ENCODE measurements at regions of chr3 and their contacts with region 1.

Region 1: GRCh38 chr3:49802719-49803464 is at the start of gene INKA1:
- DNase-seq: peak; percentile 82
- ATAC-seq: peak; percentile 68
- H3K4me3 Mint-ChIP-seq: peak within 1 kb of the TSS; percentile 92
- H3K27ac Mint-ChIP-seq: peak within 1 kb of the TSS; percentile 92
- H3K4me1 Mint-ChIP-seq: peaks cover 48% of the 10 kb centered on the region
- H3K27me3 Mint-ChIP-seq: no peaks in the 10 kb centered on the region
- CTCF ChIP-seq: peak; percentile 45
- total RNA-seq, gene INKA1: 9.4 and 10.0 TPM in 2 replicates

Region 2: DNA sequence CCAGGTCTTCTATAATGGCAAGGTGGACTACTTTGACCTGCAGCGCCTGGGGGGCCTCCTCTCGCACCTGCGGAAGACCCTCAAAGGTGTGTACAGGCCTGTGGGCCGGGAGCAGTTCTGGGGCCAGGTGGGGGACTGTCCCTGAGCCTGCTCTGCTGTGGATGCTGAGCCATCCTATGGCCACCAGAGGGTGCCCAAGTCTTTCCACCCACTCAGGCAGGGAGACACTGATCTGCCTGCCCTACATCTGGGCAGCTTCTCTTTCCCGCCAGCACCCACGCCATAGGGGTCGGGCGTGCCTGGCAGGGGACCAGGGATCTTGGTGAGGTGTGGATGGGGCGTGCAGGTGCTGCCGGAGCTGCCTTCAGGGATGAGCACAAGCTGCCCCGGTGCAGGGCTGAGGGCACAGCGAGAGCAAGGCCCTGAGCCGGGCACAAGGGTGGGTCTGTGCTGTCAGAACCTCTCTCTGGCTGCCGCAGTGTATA is 99.4 kb before region 1 on chr3:
- CTCF ChIA-PET with region 1: interaction called, 3 read pairs
- POLR2A ChIA-PET with region 1: interaction called, 4 read pairs
- intact Hi-C with region 1: loop called (anchors 1 kb)
- DNase-seq: peak; percentile 54
- ATAC-seq: peak; percentile 100
- H3K4me3 Mint-ChIP-seq: no peak overlapping the region
- H3K27ac Mint-ChIP-seq: peak overlapping the region; percentile 41
- H3K4me1 Mint-ChIP-seq: peaks cover 4% of the 10 kb centered on the region
- H3K27me3 Mint-ChIP-seq: no peaks in the 10 kb centered on the region
- CTCF ChIP-seq: no peak

Region 3: DNA sequence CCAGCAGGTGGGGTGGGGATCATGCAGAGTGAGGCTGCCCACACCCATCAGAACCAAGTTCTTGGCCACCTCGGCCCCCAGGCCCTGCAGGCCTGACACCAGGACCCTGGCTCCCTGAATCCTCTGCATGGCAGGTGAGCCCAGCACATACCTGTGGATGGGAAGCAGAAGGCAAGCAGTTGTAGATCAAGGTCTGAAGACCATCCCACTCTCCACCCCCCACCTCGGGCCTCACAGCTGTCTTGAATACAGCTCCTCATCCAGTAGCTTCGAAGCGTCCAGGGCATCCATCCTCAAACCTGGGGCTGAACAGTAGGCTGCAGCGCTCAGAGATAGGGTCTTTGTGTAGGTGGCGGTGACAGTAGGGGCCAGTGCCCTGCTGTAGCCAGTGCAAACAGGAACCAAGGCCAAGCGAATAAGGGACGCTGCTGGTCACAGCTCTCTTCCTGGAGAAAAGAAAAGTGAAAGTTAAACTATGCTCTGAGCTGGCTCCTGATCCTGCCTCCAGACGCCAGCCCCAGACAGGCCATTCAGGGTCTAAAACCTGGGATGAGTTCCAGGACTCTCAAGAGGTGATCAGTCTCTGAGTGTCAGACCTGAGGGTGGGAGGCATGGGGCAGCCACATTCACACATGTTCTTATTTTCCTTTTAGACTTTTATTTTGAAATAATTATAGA is 10.7 kb after region 1 on chr3 and contains the start of gene UBA7:
- CTCF ChIA-PET with region 1: interaction called, 24 read pairs
- POLR2A ChIA-PET with region 1: interaction called, 138 read pairs
- intact Hi-C with region 1: loop called (anchors 1 kb)
- DNase-seq: peak; percentile 35
- ATAC-seq: peak; percentile 90
- H3K4me3 Mint-ChIP-seq: peak within 1 kb of the TSS; percentile 94
- H3K27ac Mint-ChIP-seq: peak within 1 kb of the TSS; percentile 97
- H3K4me1 Mint-ChIP-seq: peaks cover 51% of the 10 kb centered on the region
- H3K27me3 Mint-ChIP-seq: no peaks in the 10 kb centered on the region
- CTCF ChIP-seq: no peak
- total RNA-seq, gene UBA7: 216 and 237 TPM in 2 replicates

Region 4: GRCh38 chr3:49906004-49906743 is 103.3 kb after region 1 on chr3:
- CTCF ChIA-PET with region 1: interaction called, 4 read pairs
- POLR2A ChIA-PET with region 1: interaction called, 8 read pairs
- intact Hi-C with region 1: loop called (anchors 1 kb)
- DNase-seq: peak; percentile 38
- ATAC-seq: peak; percentile 30
- H3K4me3 Mint-ChIP-seq: peak overlapping the region; percentile 55
- H3K27ac Mint-ChIP-seq: peak overlapping the region; percentile 56
- H3K4me1 Mint-ChIP-seq: peaks cover 30% of the 10 kb centered on the region
- H3K27me3 Mint-ChIP-seq: no peaks in the 10 kb centered on the region
- CTCF ChIP-seq: no peak

Region 5: GRCh38 chr3:50088725-50089608 is 286.1 kb after region 1 on chr3 and contains the start of gene RBM5:
- CTCF ChIA-PET with region 1: no interaction called
- POLR2A ChIA-PET with region 1: interaction called, 8 read pairs
- intact Hi-C with region 1: loop called (anchors 1 kb)
- DNase-seq: peak; percentile 78
- ATAC-seq: peak; percentile 100
- H3K4me3 Mint-ChIP-seq: peak within 1 kb of the TSS; percentile 98
- H3K27ac Mint-ChIP-seq: peak within 1 kb of the TSS; percentile 97
- H3K4me1 Mint-ChIP-seq: peaks cover 34% of the 10 kb centered on the region
- H3K27me3 Mint-ChIP-seq: no peaks in the 10 kb centered on the region
- CTCF ChIP-seq: no peak
- total RNA-seq, gene RBM5: 261 and 316 TPM in 2 replicates